ENCODE measurements at regions of chr18 and their contacts with region 1.

Region 1: GRCh38 chr18:24726727-24727492 is 266.5 kb downstream of the HRH4 start:
- DNase-seq: peak; percentile 75
- H3K4me3 ChIP-seq: peak overlapping the region in 3 of 4 donors; percentile 25 to 33 (median 32)
- H3K27ac ChIP-seq: no peak overlapping the region
- H3K4me1 ChIP-seq: no peaks in the 10 kb centered on the region
- H3K27me3 ChIP-seq: no peaks in the 10 kb centered on the region
- CTCF ChIP-seq: peak; percentile 66 to 82 (median 76)
- EP300 ChIP-seq: no peak
- POLR2A ChIP-seq: no peak

Region 2: GRCh38 chr18:24362758-24363157 is 364.2 kb before region 1 on chr18:
- intact Hi-C with region 1: loop called (anchors 5 kb)
- DNase-seq: no peak
- H3K4me3 ChIP-seq: no peak overlapping the region
- H3K27ac ChIP-seq: no peak overlapping the region
- H3K4me1 ChIP-seq: no peaks in the 10 kb centered on the region
- H3K27me3 ChIP-seq: no peaks in the 10 kb centered on the region
- CTCF ChIP-seq: no peak
- EP300 ChIP-seq: no peak
- POLR2A ChIP-seq: no peak

Region 3: DNA sequence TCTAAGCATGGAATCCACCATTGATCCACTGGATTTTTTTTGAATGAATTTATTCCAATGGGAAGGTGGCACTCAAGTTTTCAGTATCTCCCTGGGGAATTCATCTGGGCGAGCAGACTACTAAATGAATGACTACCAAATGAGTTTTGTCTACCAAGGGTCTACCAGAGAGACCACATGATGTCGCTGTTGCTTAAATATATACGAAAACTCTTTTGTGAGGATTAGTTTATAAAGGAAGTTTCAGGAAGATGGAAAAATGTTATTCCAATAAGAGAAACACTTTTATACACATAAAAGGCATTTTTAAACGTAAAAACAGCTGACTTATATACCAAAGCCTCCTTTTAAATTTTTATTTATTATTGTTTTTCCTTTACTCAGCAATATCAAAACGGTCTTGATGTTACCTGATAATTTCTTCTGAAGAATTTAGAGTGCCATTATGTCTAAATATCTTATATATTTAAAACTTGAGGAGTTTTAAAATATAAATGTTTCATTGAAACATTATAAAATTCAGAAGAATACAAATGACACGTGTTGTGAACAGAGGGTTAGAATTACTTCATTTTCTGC is 126.7 kb before region 1 on chr18:
- intact Hi-C with region 1: loop called (anchors 1 kb)
- DNase-seq: no peak
- H3K4me3 ChIP-seq: no peak overlapping the region
- H3K27ac ChIP-seq: no peak overlapping the region
- H3K4me1 ChIP-seq: no peaks in the 10 kb centered on the region
- H3K27me3 ChIP-seq: no peaks in the 10 kb centered on the region
- CTCF ChIP-seq: peak in 3 of 4 experiments; percentile 30 to 47 (median 34)
- EP300 ChIP-seq: no peak
- POLR2A ChIP-seq: no peak

Region 4: GRCh38 chr18:25144820-25145219 is 417.9 kb after region 1 on chr18:
- intact Hi-C with region 1: no loop called
- DNase-seq: no peak
- H3K4me3 ChIP-seq: no peak overlapping the region
- H3K27ac ChIP-seq: no peak overlapping the region
- H3K4me1 ChIP-seq: peaks cover 0 to 22% (median 14%) of the 10 kb centered on the region in 4 donors
- H3K27me3 ChIP-seq: no peaks in the 10 kb centered on the region
- CTCF ChIP-seq: no peak
- EP300 ChIP-seq: no peak
- POLR2A ChIP-seq: no peak